Posterior vena cava (tissue), 2 donors: ENCODE measurements at regions of chr10 and their contacts with region 1.

Region 1: DNA sequence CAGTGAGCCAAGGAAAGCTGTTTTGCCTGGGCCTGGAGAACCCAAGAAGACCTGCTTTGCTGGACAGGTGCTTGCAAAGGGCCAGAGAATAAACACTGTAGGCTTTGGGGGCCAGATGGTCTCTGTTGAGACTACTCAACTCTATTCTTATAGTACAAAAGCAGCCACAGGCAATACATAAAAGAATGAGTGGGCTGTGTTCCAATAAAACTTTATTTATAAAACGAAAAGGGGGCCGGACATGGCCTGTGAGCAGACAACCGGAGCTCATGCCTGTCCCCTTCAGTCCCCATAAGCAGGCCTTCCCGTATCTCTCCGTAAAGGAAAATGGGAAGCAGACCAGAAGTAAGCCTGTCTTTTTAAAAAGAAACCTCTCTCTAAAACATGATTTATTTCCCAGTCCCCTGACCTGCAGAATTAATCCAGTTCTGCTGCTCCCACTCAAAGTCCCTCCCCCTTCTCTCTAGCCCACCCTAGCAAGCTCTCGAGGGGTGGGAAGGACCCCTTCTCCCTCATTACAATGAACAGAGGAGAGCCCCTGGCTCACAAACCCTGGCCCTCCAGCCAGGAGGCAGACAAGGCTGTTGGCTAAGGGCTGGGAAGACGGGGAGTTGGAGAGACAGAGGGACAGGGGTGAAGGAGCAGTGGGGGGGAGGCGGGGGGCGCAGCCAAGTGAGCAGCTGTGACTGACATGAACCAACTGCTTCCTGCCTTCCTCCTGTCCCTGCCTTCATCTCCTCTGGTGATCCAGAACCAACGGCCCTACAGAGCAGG is 177.8 kb downstream of the NEURL1 start:
- DNase-seq: no peak

Region 2: GRCh38 chr10:103612462-103613365 is 58.6 kb before region 1 on chr10:
- intact Hi-C with region 1: loop called (anchors 5 to 10 kb)
- DNase-seq: no peak

Region 3: DNA sequence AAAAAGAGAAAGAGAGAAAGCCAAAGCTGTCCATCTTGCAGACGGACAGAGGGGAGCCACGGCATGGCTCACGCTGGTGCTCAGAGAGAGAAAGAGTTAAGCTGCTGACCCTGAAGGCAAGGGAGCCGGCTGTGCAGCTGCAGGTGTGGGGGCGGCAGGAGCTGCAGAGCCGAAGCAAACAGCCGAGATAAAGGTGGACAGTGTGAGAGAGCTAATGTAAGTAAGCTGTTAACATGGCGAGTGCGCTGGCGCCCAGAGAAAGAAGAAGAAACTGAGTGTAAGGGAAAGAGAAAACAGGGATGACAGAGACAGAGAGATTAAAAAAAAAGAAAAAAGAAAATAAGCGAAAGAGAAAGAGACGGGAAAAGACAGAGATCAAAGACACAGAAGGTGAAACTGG is 396.2 kb after region 1 on chr10:
- intact Hi-C with region 1: no loop called
- DNase-seq: no peak